ENCODE measurements at regions of chr15 and their contacts with region 1.

Region 1: GRCh38 chr15:39642011-39642640 is 61.2 kb downstream of the THBS1 start:
- DNase-seq: peak; percentile 42
- H3K4me3 Mint-ChIP-seq: peak overlapping the region; percentile 50
- H3K27ac Mint-ChIP-seq: peak overlapping the region; percentile 46
- H3K4me1 Mint-ChIP-seq: peaks cover 14% of the 10 kb centered on the region
- H3K27me3 Mint-ChIP-seq: no peaks in the 10 kb centered on the region
- CTCF ChIP-seq: no peak

Region 2: GRCh38 chr15:39530466-39531342 is 111.4 kb before region 1 on chr15:
- CTCF ChIA-PET with region 1: no interaction called
- POLR2A ChIA-PET with region 1: no interaction called
- intact Hi-C with region 1: no loop called
- DNase-seq: no peak
- H3K4me3 Mint-ChIP-seq: no peak overlapping the region
- H3K27ac Mint-ChIP-seq: no peak overlapping the region
- H3K4me1 Mint-ChIP-seq: peaks cover 8% of the 10 kb centered on the region
- H3K27me3 Mint-ChIP-seq: no peaks in the 10 kb centered on the region
- CTCF ChIP-seq: no peak

Region 3: GRCh38 chr15:39624806-39625205 is 17.3 kb before region 1 on chr15:
- CTCF ChIA-PET with region 1: interaction called, 6 read pairs
- POLR2A ChIA-PET with region 1: interaction called, 16 read pairs
- intact Hi-C with region 1: no loop called
- DNase-seq: peak; percentile 87
- H3K4me3 Mint-ChIP-seq: peak overlapping the region; percentile 11
- H3K27ac Mint-ChIP-seq: peak overlapping the region; percentile 99
- H3K4me1 Mint-ChIP-seq: peaks cover 32% of the 10 kb centered on the region
- H3K27me3 Mint-ChIP-seq: no peaks in the 10 kb centered on the region
- CTCF ChIP-seq: no peak

Region 4: DNA sequence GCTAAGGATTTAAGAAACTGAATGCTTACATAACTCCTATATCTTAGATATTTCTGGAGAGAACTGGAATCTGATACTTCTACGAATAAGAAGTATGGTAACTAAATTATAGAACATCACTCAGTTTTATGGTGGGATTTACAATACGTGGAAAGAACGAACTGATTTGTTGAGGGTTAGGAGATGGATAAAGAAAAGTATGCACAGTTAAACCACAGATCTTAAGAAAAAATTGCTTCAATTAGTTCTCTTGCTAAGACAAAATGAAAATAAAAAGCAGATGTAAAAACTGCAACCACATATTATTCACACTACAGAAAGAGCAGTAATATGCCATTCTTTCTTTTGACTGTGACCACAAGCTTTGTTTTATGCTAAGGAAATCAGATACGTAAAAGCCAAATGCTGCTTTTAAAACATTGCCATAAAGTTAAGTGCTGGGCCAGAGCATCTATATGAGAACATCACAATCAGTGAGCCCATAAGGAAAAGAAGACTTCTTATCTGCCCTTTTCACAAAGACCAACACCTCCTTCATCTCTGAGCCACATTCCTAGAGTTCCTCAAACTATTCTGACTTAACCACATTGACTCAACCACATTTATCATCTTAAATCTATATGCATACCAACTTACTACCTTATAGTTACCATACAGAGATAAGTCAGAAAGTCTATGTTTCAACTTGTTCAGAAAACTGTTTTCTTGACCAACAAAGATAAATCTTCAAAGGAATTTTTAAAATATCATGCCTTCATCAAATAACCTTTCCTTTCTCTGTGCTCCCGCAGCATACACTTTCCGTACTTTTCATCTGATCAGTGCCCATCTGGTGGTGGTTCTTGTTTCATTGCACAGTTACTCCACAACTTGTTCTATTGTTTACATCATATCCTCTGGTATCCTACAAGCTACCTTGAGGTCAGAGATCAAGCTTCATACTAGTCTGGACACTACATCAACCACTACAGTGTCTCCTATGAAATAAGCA is 78.8 kb after region 1 on chr15:
- CTCF ChIA-PET with region 1: no interaction called
- POLR2A ChIA-PET with region 1: no interaction called
- intact Hi-C with region 1: no loop called
- DNase-seq: no peak
- H3K4me3 Mint-ChIP-seq: no peak overlapping the region
- H3K27ac Mint-ChIP-seq: no peak overlapping the region
- H3K4me1 Mint-ChIP-seq: peaks cover 16% of the 10 kb centered on the region
- H3K27me3 Mint-ChIP-seq: no peaks in the 10 kb centered on the region
- CTCF ChIP-seq: no peak

Measured in MCF 10A (cell line).